HepG2 (cell line): ENCODE measurements at regions of chr17 and their contacts with region 1.

Region 1: DNA sequence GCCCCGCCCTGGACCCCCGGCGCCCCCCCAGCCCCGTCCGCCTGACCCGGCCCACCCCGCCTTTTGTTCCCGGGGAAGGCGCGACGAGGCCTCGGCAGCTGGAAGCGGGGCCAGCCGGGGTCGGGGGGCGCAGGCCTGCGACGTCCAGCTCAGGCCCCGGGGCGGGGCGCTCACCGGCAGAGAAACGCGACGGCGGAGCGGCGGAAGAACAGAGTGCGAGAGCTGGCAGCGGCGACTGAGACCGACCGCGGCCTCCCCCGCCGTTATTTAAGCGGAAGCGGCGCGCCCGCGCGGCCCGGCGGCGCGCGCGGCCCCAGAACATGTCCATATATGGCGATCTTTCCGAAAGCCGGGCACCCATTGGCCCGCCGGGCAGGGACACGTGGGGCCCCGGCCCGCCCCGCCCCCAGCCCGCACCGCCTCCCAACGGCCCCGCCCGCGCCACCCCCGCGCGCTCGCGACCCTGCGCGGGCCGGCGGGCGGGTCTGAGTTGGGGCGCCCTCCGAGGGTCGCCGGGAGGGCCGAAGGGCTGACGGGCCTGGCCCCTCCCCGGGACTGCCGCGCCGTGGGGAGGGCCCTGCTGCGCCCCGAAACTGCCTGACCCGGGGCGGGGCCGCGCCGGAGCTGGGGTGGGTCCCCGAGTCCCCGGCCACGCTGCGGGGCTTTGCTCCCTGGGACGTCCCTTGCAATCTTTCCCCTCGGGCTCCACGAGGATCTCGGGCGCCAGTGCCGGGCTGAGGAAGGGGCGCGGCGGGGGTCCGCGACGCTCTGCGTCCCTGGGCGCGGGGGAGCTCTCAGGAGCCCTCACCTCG is at the start of gene ACTG1:
- DNase-seq: peak; percentile 86
- ATAC-seq: peak; percentile 21
- H3K4me3 ChIP-seq: peak within 1 kb of the TSS; percentile 67 to 90 (median 75)
- H3K27ac ChIP-seq: peak within 1 kb of the TSS; percentile 86
- H3K4me1 ChIP-seq: peaks cover 60% of the 10 kb centered on the region
- H3K27me3 ChIP-seq: no peaks in the 10 kb centered on the region; a peak in 1 of 5 replicates
- CTCF ChIP-seq: no peak
- EP300 ChIP-seq: peak in 1 of 2 experiments; percentile 18; a peak in 1 of 4 replicates
- POLR2A ChIP-seq: peak in 1 of 2 experiments; percentile 99; a peak in 2 of 4 replicates
- RAD21 ChIP-seq: peak; percentile 9; the same call in 1 of the 2 replicates
- total RNA-seq, gene ACTG1: 973 and 1,028 TPM in 2 replicates

Region 2: DNA sequence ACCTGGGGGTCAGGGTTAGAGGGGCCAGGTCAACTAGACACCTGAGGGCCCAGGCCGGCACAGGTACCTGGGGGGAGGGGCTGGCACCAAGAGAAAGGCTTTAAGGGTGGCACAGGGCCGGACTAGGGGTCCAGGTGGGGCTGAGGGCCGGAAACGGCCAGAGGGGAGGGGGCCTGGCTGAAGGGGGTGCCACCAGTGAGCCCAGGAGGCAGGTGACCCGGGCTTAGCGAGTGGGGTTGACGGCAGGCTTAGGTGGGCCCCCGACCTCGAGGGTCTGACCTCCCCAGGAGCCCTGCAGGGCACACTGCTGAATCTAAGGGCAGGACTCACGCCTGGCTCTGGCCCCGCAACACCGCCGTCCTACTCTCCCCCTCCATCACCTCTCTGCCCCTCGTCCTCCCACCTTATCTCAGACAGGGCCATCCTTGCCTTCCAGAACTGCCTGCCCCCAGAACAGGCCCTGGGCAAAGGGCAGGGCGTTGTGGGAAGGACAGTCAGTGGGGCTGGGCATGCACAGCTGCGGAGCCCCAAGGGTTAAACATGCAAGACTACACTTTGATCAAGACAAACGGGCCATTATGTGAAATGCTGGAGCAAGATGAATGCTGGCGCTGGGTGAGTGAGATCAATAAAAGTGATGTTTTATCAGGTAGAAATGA is 44.5 kb before region 1 on chr17:
- CTCF ChIA-PET with region 1: no interaction called
- POLR2A ChIA-PET with region 1: no interaction called
- in situ Hi-C with region 1: no loop called
- intact Hi-C with region 1: loop called (anchors 1 kb)
- DNase-seq: peak; percentile 79
- ATAC-seq: peak; percentile 23
- H3K4me3 ChIP-seq: peak overlapping the region; percentile 12 to 51 (median 38); a peak in 5 of 6 replicates
- H3K27ac ChIP-seq: no peak overlapping the region
- H3K4me1 ChIP-seq: peaks cover 46% of the 10 kb centered on the region
- H3K27me3 ChIP-seq: peaks cover 3 to 32% of the 10 kb centered on the region in 2 experiments; a peak in 4 of 5 replicates
- CTCF ChIP-seq: no peak; the same call in 1 of the 2 replicates
- EP300 ChIP-seq: no peak
- POLR2A ChIP-seq: no peak
- RAD21 ChIP-seq: no peak

Region 3: GRCh38 chr17:81491181-81491581 is 21.6 kb before region 1 on chr17:
- CTCF ChIA-PET with region 1: no interaction called
- POLR2A ChIA-PET with region 1: interaction called, 13 read pairs
- in situ Hi-C with region 1: no loop called
- intact Hi-C with region 1: no loop called
- DNase-seq: no peak
- ATAC-seq: peak; percentile 24
- H3K4me3 ChIP-seq: peak overlapping the region in 1 of 3 experiments; percentile 5; a peak in 1 of 6 replicates
- H3K27ac ChIP-seq: no peak overlapping the region
- H3K4me1 ChIP-seq: peaks cover 74% of the 10 kb centered on the region
- H3K27me3 ChIP-seq: peaks cover 1 to 29% of the 10 kb centered on the region in 2 experiments
- CTCF ChIP-seq: no peak
- EP300 ChIP-seq: no peak
- POLR2A ChIP-seq: no peak
- RAD21 ChIP-seq: no peak